ENCODE measurements at regions of chr19 and their contacts with region 1.

Region 1: GRCh38 chr19:10717356-10718204 is at the start of gene DNM2:
- DNase-seq: peak; percentile 100
- ATAC-seq: peak; percentile 90
- H3K4me3 ChIP-seq: peak within 1 kb of the TSS; percentile 89 to 90
- H3K27ac ChIP-seq: peak within 1 kb of the TSS; percentile 92
- H3K4me1 ChIP-seq: peaks cover 7 to 14% of the 10 kb centered on the region in 2 experiments; a peak in 3 of 4 replicates
- H3K27me3 ChIP-seq: no peaks in the 10 kb centered on the region
- CTCF ChIP-seq: peak; percentile 77 to 95 (median 84)
- POLR2A ChIP-seq: peak; percentile 59
- RAD21 ChIP-seq: peak; percentile 98
- total RNA-seq, gene DNM2: 183 TPM

Region 2: GRCh38 chr19:10727685-10728201 is 10.2 kb after region 1 on chr19:
- CTCF ChIA-PET with region 1: interaction called, 11 read pairs
- POLR2A ChIA-PET with region 1: no interaction called
- RAD21 ChIA-PET with region 1: no interaction called
- intact Hi-C with region 1: no loop called
- DNase-seq: no peak
- ATAC-seq: no peak
- H3K4me3 ChIP-seq: no peak overlapping the region
- H3K27ac ChIP-seq: no peak overlapping the region
- H3K4me1 ChIP-seq: peaks cover 15 to 20% of the 10 kb centered on the region in 2 experiments; a peak in 3 of 4 replicates
- H3K27me3 ChIP-seq: no peaks in the 10 kb centered on the region
- CTCF ChIP-seq: no peak
- POLR2A ChIP-seq: no peak
- RAD21 ChIP-seq: no peak

Region 3: GRCh38 chr19:10828981-10829821 is 111.6 kb after region 1 on chr19:
- CTCF ChIA-PET with region 1: interaction called, 10 read pairs
- POLR2A ChIA-PET with region 1: no interaction called
- RAD21 ChIA-PET with region 1: no interaction called
- intact Hi-C with region 1: loop called (anchors 2 kb)
- DNase-seq: no peak
- ATAC-seq: peak; percentile 68
- H3K4me3 ChIP-seq: no peak overlapping the region
- H3K27ac ChIP-seq: no peak overlapping the region; the same call in 1 of the 2 replicates
- H3K4me1 ChIP-seq: no peaks in the 10 kb centered on the region
- H3K27me3 ChIP-seq: no peaks in the 10 kb centered on the region
- CTCF ChIP-seq: peak in 2 of 3 experiments; percentile 26; a peak in 1 of 6 replicates
- POLR2A ChIP-seq: no peak
- RAD21 ChIP-seq: peak; percentile 34; the same call in 1 of the 2 replicates

Region 4: DNA sequence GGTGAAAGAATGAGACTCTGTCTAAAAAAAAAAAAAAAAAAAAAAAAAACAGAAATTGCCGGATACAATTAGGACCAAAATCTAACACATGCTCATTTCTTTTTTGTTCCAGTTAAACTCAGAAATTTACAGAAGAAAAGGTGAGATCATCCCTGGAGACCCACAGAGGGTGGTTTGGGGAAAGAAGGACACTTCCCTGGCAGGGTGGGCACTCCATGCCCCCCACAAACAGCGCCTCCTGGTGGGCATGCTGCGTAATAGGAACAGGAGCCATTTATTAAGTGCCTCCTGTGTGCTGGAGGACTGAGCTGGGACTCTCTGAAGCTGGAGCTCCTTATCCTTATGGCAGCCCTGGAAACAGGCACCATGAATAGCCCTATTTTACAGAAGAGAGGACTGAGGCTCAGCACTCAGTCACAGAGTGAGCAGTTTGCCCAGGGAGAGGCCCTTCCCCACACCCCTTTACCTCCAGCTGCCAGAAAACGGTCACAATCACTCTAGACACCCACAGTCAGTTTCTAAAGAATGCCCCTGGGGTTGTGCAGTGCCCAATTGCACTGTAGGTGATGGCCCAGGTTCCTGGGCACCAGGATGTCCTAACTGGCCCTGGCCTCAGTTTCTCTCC is 140.7 kb after region 1 on chr19:
- CTCF ChIA-PET with region 1: interaction called, 42 read pairs
- POLR2A ChIA-PET with region 1: interaction called, 14 read pairs
- RAD21 ChIA-PET with region 1: no interaction called
- intact Hi-C with region 1: no loop called
- DNase-seq: no peak
- ATAC-seq: peak; percentile 54
- H3K4me3 ChIP-seq: no peak overlapping the region
- H3K27ac ChIP-seq: no peak overlapping the region
- H3K4me1 ChIP-seq: peaks cover under 1 to 22% of the 10 kb centered on the region in 2 experiments; a peak in 3 of 4 replicates
- H3K27me3 ChIP-seq: no peaks in the 10 kb centered on the region
- CTCF ChIP-seq: peak; percentile 64 to 99 (median 96)
- POLR2A ChIP-seq: no peak
- RAD21 ChIP-seq: peak; percentile 44; the same call in 1 of the 2 replicates

Measured in HCT116 (cell line).